Activated naive CD4-positive, alpha-beta T cell treated with anti-CD3 and anti-CD28 coated beads, Interleukin-2, amount 10 ng/mL, durations not matched to agents 7 days and 5 days (primary cell): ENCODE measurements at regions of chr6 and their contacts with region 1.

Region 1: GRCh38 chr6:33771146-33772081 is 17.5 kb downstream of the LEMD2 start:
- DNase-seq: peak; percentile 70
- H3K4me3 Mint-ChIP-seq: no peak overlapping the region
- H3K27ac Mint-ChIP-seq: peak overlapping the region; percentile 6
- H3K4me1 Mint-ChIP-seq: peaks cover 6% of the 10 kb centered on the region
- H3K27me3 Mint-ChIP-seq: peaks cover 33% of the 10 kb centered on the region

Region 2: GRCh38 chr6:33711140-33712129 is 60.0 kb before region 1 on chr6 and contains the start of gene UQCC2:
- CTCF ChIA-PET with region 1: interaction called, 10 read pairs
- DNase-seq: peak; percentile 98
- H3K4me3 Mint-ChIP-seq: peak within 1 kb of the TSS; percentile 95
- H3K27ac Mint-ChIP-seq: peak within 1 kb of the TSS; percentile 95
- H3K4me1 Mint-ChIP-seq: peaks cover 49% of the 10 kb centered on the region
- H3K27me3 Mint-ChIP-seq: peaks cover 14% of the 10 kb centered on the region

Region 3: GRCh38 chr6:33744001-33744848 is 27.2 kb before region 1 on chr6:
- CTCF ChIA-PET with region 1: interaction called, 144 read pairs
- DNase-seq: peak; percentile 80
- H3K4me3 Mint-ChIP-seq: no peak overlapping the region
- H3K27ac Mint-ChIP-seq: no peak overlapping the region
- H3K4me1 Mint-ChIP-seq: no peaks in the 10 kb centered on the region
- H3K27me3 Mint-ChIP-seq: peaks cover 66% of the 10 kb centered on the region

Region 4: GRCh38 chr6:33860706-33861474 is 89.5 kb after region 1 on chr6:
- CTCF ChIA-PET with region 1: interaction called, 11 read pairs
- DNase-seq: peak; percentile 65
- H3K4me3 Mint-ChIP-seq: no peak overlapping the region
- H3K27ac Mint-ChIP-seq: peak overlapping the region; percentile 33
- H3K4me1 Mint-ChIP-seq: peaks cover 55% of the 10 kb centered on the region
- H3K27me3 Mint-ChIP-seq: peaks cover 83% of the 10 kb centered on the region

Region 5: GRCh38 chr6:34154668-34155447 is 383.4 kb after region 1 on chr6:
- CTCF ChIA-PET with region 1: interaction called, 59 read pairs
- DNase-seq: peak; percentile 73
- H3K4me3 Mint-ChIP-seq: no peak overlapping the region
- H3K27ac Mint-ChIP-seq: no peak overlapping the region
- H3K4me1 Mint-ChIP-seq: peaks cover 3% of the 10 kb centered on the region
- H3K27me3 Mint-ChIP-seq: peaks cover 97% of the 10 kb centered on the region